Endothelial cell of umbilical vein (primary cell): ENCODE measurements at regions of chr19 and their contacts with region 1.

Region 1: GRCh38 chr19:41570639-41571112 is 5.3 kb upstream of the CEACAM21 start:
- DNase-seq: peak; percentile 70
- H3K4me3 ChIP-seq: no peak overlapping the region
- H3K27ac ChIP-seq: no peak overlapping the region
- H3K4me1 ChIP-seq: no peaks in the 10 kb centered on the region
- H3K27me3 ChIP-seq: peaks cover 19 to 36% of the 10 kb centered on the region in 2 experiments
- CTCF ChIP-seq: peak; percentile 82 to 95
- POLR2A ChIP-seq: no peak

Region 2: DNA sequence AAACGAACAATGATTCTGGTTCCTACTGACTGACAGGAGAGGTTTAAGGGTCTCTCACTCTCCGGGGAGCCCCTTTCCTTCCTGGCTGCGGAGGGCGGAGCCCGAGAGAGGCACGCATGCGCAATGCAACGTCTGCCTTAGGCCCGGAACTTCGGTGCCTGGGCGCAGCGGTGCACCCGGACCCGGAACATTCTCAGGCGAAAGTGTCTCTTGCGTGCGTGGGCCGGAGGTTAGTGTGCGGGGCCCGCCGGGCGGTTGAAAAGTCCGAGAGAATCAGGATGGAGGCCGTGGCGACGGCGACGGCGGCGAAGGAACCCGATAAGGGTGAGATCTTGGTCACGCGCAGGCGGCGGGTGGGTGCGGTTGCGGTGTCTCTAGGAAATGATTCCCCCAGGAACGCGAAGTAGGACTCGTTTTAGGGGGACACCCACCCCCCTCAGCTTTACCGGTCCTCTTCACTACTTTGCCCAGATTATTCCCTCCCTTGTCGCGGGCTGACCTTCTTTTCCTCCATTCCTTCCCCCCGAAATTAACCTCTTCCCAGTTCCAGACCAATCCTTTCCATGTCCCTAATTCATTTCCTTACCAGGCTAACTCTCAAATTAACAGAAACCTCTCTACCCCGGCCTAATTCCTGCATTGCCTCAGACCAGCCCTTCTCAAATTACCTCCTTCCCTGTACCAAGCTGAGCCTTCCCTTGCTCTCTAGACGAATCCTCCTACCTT is 260.5 kb before region 1 on chr19 and contains the start of gene CCDC97:
- CTCF ChIA-PET with region 1: interaction called, 4 read pairs
- POLR2A ChIA-PET with region 1: no interaction called
- dilution Hi-C with region 1: no loop called
- intact Hi-C with region 1: loop called (anchors 5 kb)
- DNase-seq: peak; percentile 91
- H3K4me3 ChIP-seq: peak within 1 kb of the TSS; percentile 71 to 97 (median 81)
- H3K27ac ChIP-seq: peak within 1 kb of the TSS; percentile 57
- H3K4me1 ChIP-seq: peaks cover 42% of the 10 kb centered on the region
- H3K27me3 ChIP-seq: no peaks in the 10 kb centered on the region
- CTCF ChIP-seq: no peak
- POLR2A ChIP-seq: peak; percentile 98
- total RNA-seq, gene CCDC97: 24.2 and 27.2 TPM in 2 replicates

Region 3: DNA sequence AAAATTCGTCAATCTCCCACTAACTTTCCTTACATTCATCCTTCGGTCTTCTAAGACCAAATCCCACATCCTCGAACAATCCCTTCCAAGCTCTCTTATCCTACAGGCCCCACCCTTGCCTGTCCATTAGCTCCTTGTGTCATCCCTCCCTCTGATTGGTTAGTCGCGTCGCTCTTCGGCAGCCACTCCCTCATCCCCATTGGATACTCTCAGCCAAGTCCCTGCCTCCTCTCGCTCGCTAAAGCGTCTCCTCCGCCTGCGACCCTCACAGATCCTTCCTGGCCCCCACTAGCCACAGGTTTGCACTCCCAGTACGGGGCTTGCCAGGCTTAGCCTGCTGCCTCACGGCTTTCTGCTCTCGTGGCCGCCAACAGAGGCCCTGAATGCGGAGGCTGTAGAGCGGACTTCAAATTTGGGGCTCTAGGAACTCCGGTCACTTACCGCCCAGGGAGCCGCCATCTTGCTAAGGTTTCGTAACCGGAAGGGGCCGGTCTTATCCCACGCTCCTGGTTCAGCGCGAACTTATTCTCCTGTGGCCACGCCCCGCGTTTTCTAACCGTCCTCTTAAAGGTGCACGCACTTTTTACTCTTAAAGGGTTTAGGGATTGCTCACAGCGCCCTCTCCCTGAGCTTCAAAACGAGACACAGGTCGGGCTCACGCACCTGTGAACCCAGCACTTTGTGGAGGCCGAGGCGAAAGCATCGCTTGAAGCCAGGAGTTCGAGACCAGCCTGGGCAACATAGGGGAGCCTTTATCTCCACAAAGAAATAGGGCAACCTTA is 131.0 kb before region 1 on chr19 and contains the start of gene DMAC2:
- CTCF ChIA-PET with region 1: interaction called, 20 read pairs
- POLR2A ChIA-PET with region 1: no interaction called
- dilution Hi-C with region 1: no loop called
- intact Hi-C with region 1: no loop called
- DNase-seq: peak; percentile 98
- H3K4me3 ChIP-seq: peak within 1 kb of the TSS; percentile 66 to 87 (median 76)
- H3K27ac ChIP-seq: peak within 1 kb of the TSS; percentile 89
- H3K4me1 ChIP-seq: peaks cover 6% of the 10 kb centered on the region
- H3K27me3 ChIP-seq: peaks cover 0 to 2% of the 10 kb centered on the region in 2 experiments
- CTCF ChIP-seq: peak; percentile 37 to 52
- POLR2A ChIP-seq: peak; percentile 79
- total RNA-seq, gene DMAC2: 63.2 and 65.4 TPM in 2 replicates

Region 4: GRCh38 chr19:41457241-41457640 is 113.4 kb before region 1 on chr19:
- CTCF ChIA-PET with region 1: interaction called, 343 read pairs
- POLR2A ChIA-PET with region 1: no interaction called
- dilution Hi-C with region 1: no loop called
- intact Hi-C with region 1: no loop called
- DNase-seq: peak; percentile 30
- H3K4me3 ChIP-seq: no peak overlapping the region
- H3K27ac ChIP-seq: peak overlapping the region; percentile 72
- H3K4me1 ChIP-seq: peaks cover 29% of the 10 kb centered on the region
- H3K27me3 ChIP-seq: no peaks in the 10 kb centered on the region
- CTCF ChIP-seq: no peak
- POLR2A ChIP-seq: no peak

Region 5: GRCh38 chr19:41548954-41549688 is 21.6 kb before region 1 on chr19:
- CTCF ChIA-PET with region 1: interaction called, 18 read pairs
- POLR2A ChIA-PET with region 1: no interaction called
- dilution Hi-C with region 1: no loop called
- intact Hi-C with region 1: no loop called
- DNase-seq: peak; percentile 89
- H3K4me3 ChIP-seq: peak overlapping the region in 2 of 3 experiments; percentile 29 to 66
- H3K27ac ChIP-seq: peak overlapping the region; percentile 92
- H3K4me1 ChIP-seq: peaks cover 38% of the 10 kb centered on the region
- H3K27me3 ChIP-seq: no peaks in the 10 kb centered on the region
- CTCF ChIP-seq: no peak
- POLR2A ChIP-seq: peak; percentile 86

Region 6: GRCh38 chr19:41597600-41598041 is 26.9 kb after region 1 on chr19:
- CTCF ChIA-PET with region 1: interaction called, 25 read pairs
- POLR2A ChIA-PET with region 1: no interaction called
- dilution Hi-C with region 1: no loop called
- intact Hi-C with region 1: loop called (anchors 1 kb)
- DNase-seq: peak; percentile 70
- H3K4me3 ChIP-seq: no peak overlapping the region
- H3K27ac ChIP-seq: no peak overlapping the region
- H3K4me1 ChIP-seq: peaks cover 5% of the 10 kb centered on the region
- H3K27me3 ChIP-seq: peaks cover 8 to 18% of the 10 kb centered on the region in 2 experiments
- CTCF ChIP-seq: peak; percentile 85 to 89
- POLR2A ChIP-seq: no peak

Region 7: DNA sequence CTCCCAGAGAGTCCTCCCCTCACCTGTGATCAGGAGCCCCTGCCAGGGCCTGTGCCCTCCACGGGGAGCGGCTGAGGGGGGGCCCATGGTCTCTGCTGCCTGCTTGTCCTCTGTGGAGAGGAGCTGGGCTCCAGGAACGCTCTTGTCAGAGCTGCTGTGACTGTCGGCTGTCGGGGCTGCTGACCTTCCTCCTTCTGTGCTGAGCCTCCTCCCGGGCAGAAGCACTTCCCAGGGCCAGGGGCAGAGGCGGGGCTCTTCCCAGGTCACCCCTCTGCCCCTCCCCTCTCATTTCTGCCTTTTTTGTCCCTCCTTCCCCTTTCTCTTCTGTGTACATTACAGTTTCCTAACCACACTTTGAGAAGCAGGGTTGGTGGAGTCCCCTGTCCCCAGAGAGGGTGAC is 56.2 kb after region 1 on chr19 and contains the start of gene CEACAM4:
- CTCF ChIA-PET with region 1: no interaction called
- POLR2A ChIA-PET with region 1: no interaction called
- dilution Hi-C with region 1: no loop called
- intact Hi-C with region 1: no loop called
- DNase-seq: no peak
- H3K4me3 ChIP-seq: no peak within 1 kb of the TSS
- H3K27ac ChIP-seq: no peak within 1 kb of the TSS
- H3K4me1 ChIP-seq: no peaks in the 10 kb centered on the region
- H3K27me3 ChIP-seq: peaks cover 0 to 2% of the 10 kb centered on the region in 2 experiments
- CTCF ChIP-seq: no peak
- POLR2A ChIP-seq: no peak
- total RNA-seq, gene CEACAM4: not detected in 2 replicates